ENCODE measurements at regions of chr1 and their contacts with region 1.

Region 1: GRCh38 chr1:25148673-25149300 is 83.5 kb downstream of the SYF2 start:
- DNase-seq: peak; percentile 56
- ATAC-seq: peak; percentile 83
- H3K4me3 Mint-ChIP-seq: no peak overlapping the region
- H3K27ac Mint-ChIP-seq: no peak overlapping the region
- H3K4me1 Mint-ChIP-seq: peaks cover 4% of the 10 kb centered on the region
- H3K27me3 Mint-ChIP-seq: peaks cover 16% of the 10 kb centered on the region
- CTCF ChIP-seq: peak; percentile 69

Region 2: DNA sequence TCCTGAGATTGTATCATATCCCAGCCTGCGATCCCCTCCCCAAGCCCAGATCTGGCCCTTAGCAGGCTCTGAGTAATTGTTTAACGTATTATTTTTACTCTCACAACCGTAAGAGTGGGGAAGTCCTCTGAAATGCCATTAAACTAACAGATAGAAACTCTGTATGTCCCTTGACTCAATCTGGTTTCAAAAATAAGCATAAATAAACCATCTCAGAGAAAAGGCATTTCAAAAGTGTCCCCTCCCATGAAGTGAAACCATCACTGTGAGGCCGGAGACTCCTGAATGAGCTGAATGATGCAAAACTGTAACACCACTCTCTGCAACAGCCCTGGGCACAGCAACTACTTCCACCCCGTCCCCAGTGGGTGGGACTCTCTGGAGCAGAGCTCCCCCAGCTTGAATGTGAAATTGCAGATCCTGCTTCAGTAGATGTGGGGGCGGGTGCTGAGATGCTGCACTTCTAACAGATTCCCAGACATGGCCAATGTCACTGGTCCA is 20.6 kb before region 1 on chr1:
- CTCF ChIA-PET with region 1: interaction called, 15 read pairs
- POLR2A ChIA-PET with region 1: no interaction called
- intact Hi-C with region 1: no loop called
- DNase-seq: peak; percentile 17
- ATAC-seq: peak; percentile 46
- H3K4me3 Mint-ChIP-seq: no peak overlapping the region
- H3K27ac Mint-ChIP-seq: no peak overlapping the region
- H3K4me1 Mint-ChIP-seq: peaks cover 11% of the 10 kb centered on the region
- H3K27me3 Mint-ChIP-seq: no peaks in the 10 kb centered on the region
- CTCF ChIP-seq: no peak

Region 3: GRCh38 chr1:25167331-25168199 is 18.8 kb after region 1 on chr1:
- CTCF ChIA-PET with region 1: interaction called, 10 read pairs
- POLR2A ChIA-PET with region 1: interaction called, 3 read pairs
- intact Hi-C with region 1: no loop called
- DNase-seq: no peak
- ATAC-seq: no peak
- H3K4me3 Mint-ChIP-seq: no peak overlapping the region
- H3K27ac Mint-ChIP-seq: no peak overlapping the region
- H3K4me1 Mint-ChIP-seq: no peaks in the 10 kb centered on the region
- H3K27me3 Mint-ChIP-seq: no peaks in the 10 kb centered on the region
- CTCF ChIP-seq: no peak